Left colon (tissue), 2 donors: ENCODE measurements at regions of chr2 and their contacts with region 1.

Region 1: GRCh38 chr2:88159955-88160415 is 10.2 kb upstream of the THNSL2 start:
- DNase-seq: peak; percentile 51 to 65
- ATAC-seq: peak; percentile 93

Region 2: DNA sequence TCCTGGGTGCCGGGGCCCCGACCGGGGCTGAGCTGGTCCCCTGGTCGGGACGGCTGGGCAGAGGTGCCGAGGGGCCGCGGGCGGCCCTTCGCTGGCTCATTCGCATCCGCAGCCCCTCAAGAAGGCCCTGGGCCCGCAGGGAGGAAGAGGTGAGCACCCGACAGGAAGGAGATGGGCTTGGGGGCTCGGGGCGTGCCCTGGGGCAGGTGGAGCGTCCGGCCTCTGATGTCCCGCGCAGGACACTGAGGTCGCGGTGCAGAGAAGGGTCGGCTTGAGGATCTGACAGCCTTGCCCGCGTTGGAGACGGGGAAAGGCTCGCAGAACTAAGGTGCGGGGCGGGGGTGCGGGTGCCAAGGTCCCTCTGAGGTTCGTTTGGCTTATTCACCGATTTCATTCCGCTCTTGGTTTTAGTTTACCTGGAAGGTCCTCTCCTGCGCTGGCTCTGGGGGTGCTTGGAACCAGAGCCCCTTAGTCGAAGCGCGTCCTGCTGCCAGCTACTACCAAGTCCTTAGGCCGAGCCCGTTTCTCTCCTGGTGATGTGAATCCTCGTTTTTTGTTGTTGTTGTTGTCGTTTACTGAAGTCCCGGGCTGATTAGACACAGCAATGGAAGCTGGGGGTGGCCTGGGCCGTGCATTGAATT is 1350.4 kb before region 1 on chr2:
- intact Hi-C with region 1: loop called in 1 of 2 experiments (anchors 10 kb)
- DNase-seq: no peak
- ATAC-seq: no peak

Region 3: DNA sequence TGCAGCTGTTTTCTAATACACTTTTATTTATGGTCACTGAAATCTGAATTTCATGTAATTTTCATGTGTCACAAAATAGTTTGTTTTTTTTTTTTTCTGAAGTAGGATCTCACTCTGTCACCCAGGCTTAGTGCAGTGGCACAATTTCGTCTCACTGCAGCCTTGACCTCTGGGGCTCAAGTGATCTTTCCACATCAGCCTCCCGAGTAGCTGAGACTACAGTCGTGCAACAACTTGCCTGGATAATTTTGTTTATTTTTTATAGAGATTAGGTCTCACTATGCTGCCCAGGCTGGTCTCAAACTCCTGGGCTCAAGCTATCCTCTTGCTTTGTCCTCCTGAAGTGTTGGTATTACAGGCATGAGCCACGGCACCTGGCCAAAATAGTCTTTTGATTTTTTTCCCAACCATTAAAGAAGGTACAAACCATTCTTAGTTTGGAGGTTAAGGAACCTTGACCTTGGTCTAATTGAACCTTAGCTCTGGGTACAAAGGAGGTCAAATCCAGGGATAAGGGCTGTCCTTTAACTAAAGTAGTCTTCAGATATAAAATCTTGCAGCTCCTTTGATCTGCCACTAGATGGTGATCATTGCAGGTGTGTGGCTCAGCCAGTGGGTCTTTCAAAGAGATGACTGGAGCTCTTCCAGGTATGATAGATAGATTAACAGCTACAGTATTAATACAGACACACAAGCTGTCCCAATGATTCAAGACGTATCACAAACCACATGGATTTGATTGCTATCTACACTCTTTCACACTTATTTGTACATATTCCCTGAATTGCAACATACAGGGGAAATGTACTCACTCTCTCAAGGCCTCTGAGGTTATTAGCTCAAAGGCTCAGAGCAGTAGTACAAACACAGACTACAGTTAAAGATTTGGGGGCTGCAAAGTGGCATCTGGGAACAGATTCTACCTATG is 99.7 kb before region 1 on chr2:
- intact Hi-C with region 1: loop called (anchors 2 to 10 kb)
- DNase-seq: no peak
- ATAC-seq: peak; percentile 31